Heart right ventricle (tissue), 16 donors: ENCODE measurements at regions of chr1 and their contacts with region 1.

Region 1: GRCh38 chr1:90262791-90263190 is 267.9 kb downstream of the ZNF326 start:
- DNase-seq: no peak
- ATAC-seq: no peak
- H3K4me3 ChIP-seq: no peak overlapping the region
- H3K27ac ChIP-seq: no peak overlapping the region
- H3K4me1 ChIP-seq: no peaks in the 10 kb centered on the region
- H3K27me3 ChIP-seq: no peaks in the 10 kb centered on the region
- CTCF ChIP-seq: no peak

Region 2: DNA sequence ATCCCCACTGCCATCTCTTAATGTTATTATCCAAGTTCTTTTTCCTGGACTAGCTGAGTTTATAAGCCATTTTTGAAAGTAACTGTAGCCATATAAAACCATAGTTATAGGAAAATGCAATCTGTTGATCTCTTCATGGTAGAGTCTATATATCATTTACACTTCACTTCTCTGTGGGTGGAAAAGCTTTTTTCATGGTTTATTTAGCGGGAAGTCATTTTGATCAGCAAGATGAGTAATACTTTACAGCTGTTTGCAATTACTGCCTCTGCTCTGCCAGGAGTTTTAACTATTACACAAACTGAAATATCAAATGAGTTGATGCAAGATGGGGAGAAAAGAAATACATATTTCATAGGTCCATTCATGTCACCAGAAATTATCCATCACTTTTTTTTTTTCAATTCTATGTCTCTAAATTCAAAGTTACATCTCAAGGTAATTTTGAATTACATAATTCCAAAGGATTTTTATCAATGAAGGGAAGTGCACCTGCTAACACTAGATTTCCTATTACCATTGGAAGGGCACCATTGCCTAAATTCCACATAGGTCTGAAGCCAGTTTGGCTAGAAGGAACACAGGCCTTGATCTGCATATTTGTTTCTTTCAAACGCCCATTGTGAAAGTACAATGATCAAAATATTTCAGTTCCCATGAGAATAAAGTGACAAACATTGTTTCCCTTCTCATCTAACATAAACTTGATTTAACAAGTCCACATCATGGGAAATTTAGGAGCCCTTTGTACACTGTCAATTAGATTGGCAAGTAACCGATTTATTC is 28.8 kb after region 1 on chr1:
- intact Hi-C with region 1: no loop called
- DNase-seq: no peak
- ATAC-seq: no peak
- H3K4me3 ChIP-seq: no peak overlapping the region
- H3K27ac ChIP-seq: no peak overlapping the region
- H3K4me1 ChIP-seq: no peaks in the 10 kb centered on the region
- H3K27me3 ChIP-seq: no peaks in the 10 kb centered on the region
- CTCF ChIP-seq: no peak

Region 3: GRCh38 chr1:90325168-90325567 is 62.4 kb after region 1 on chr1:
- intact Hi-C with region 1: loop called in 1 of 10 experiments (anchors 10 kb)
- DNase-seq: no peak
- ATAC-seq: no peak
- H3K4me3 ChIP-seq: no peak overlapping the region
- H3K27ac ChIP-seq: no peak overlapping the region
- H3K4me1 ChIP-seq: peaks cover 0 to 5% (median 0%) of the 10 kb centered on the region in 9 donors
- H3K27me3 ChIP-seq: peaks cover 0 to 9% (median 0%) of the 10 kb centered on the region in 7 donors
- CTCF ChIP-seq: no peak

Region 4: GRCh38 chr1:90616395-90616794 is 353.6 kb after region 1 on chr1:
- intact Hi-C with region 1: no loop called
- DNase-seq: no peak
- ATAC-seq: no peak
- H3K4me3 ChIP-seq: no peak overlapping the region
- H3K27ac ChIP-seq: no peak overlapping the region
- H3K4me1 ChIP-seq: no peaks in the 10 kb centered on the region
- H3K27me3 ChIP-seq: no peaks in the 10 kb centered on the region
- CTCF ChIP-seq: peak in 2 of 9 donors; percentile 23 to 24